MCF 10A (cell line): ENCODE measurements at regions of chr16 and their contacts with region 1.

Region 1: DNA sequence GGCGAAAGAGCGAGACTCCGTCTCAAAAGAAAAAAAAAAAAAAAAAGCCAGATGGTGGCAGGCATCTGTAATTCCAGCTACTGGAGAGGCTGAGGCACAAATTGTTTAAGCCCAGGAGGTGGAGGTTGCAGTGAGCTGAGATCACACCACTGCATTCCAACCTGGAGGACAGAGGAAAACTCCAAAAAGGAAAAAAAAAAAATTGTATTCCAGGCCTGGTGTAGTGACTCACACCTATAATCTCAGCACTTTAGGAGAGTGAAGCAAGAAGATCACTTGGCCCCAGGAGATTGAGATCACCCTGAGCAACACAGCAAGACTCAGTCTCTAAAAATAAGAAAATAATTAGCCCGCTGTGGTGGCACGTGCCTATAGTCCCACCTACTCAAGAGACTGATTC is 20.1 kb downstream of the HBQ1 start:
- DNase-seq: peak; percentile 63
- H3K4me3 Mint-ChIP-seq: no peak overlapping the region
- H3K27ac Mint-ChIP-seq: no peak overlapping the region
- H3K4me1 Mint-ChIP-seq: no peaks in the 10 kb centered on the region
- H3K27me3 Mint-ChIP-seq: no peaks in the 10 kb centered on the region
- CTCF ChIP-seq: no peak

Region 2: GRCh38 chr16:188671-189070 is 11.7 kb before region 1 on chr16:
- CTCF ChIA-PET with region 1: interaction called, 4 read pairs
- POLR2A ChIA-PET with region 1: no interaction called
- intact Hi-C with region 1: loop called (anchors 1 kb)
- DNase-seq: no peak
- H3K4me3 Mint-ChIP-seq: no peak overlapping the region
- H3K27ac Mint-ChIP-seq: no peak overlapping the region
- H3K4me1 Mint-ChIP-seq: no peaks in the 10 kb centered on the region
- H3K27me3 Mint-ChIP-seq: no peaks in the 10 kb centered on the region
- CTCF ChIP-seq: no peak